ENCODE measurements at regions of chr6 and their contacts with region 1.

Region 1: DNA sequence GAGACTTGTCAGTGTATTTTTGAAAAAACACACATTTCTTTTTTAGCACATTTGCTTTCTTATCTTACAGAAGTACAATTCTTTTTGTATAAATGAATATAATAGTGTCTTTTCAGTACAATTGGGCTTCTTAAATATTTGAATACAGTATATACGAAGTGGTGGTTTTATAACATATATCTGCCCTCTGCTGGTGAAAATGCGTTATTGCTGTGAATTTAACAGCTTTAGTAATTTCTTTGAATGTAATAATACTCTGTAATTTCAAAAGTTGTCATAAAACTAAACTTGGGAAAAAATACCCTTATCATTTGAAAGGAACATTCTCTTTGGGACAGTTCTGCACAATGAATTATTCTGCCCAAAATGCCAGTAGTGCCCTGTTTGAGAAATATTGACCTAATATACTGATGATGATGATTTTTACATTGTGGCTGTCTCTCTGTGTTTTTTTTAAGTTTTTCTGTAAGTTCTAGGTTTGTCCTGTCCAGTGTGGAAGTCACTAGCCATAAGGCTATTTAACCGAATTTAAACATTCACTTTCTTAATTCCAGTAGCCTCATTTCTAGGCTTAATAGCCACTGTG is 19.0 kb downstream of the SMAP1 start:
- DNase-seq: no peak
- H3K4me3 ChIP-seq: no peak overlapping the region
- H3K4me3 Mint-ChIP-seq: no peak overlapping the region
- H3K27ac Mint-ChIP-seq: no peak overlapping the region
- H3K4me1 ChIP-seq: no peaks in the 10 kb centered on the region
- H3K4me1 Mint-ChIP-seq: peaks cover 20% of the 10 kb centered on the region
- H3K27me3 ChIP-seq: no peaks in the 10 kb centered on the region
- H3K27me3 Mint-ChIP-seq: no peaks in the 10 kb centered on the region
- CTCF ChIP-seq: peak; percentile 49

Region 2: GRCh38 chr6:70310063-70310694 is 376.5 kb before region 1 on chr6:
- CTCF ChIA-PET with region 1: interaction called, 3 read pairs
- POLR2A ChIA-PET with region 1: no interaction called
- intact Hi-C with region 1: loop called (anchors 5 kb)
- DNase-seq: peak in 1 of 2 experiments; percentile 39
- H3K4me3 ChIP-seq: no peak overlapping the region
- H3K4me3 Mint-ChIP-seq: no peak overlapping the region
- H3K27ac Mint-ChIP-seq: no peak overlapping the region
- H3K4me1 ChIP-seq: no peaks in the 10 kb centered on the region
- H3K4me1 Mint-ChIP-seq: peaks cover 6% of the 10 kb centered on the region
- H3K27me3 ChIP-seq: no peaks in the 10 kb centered on the region
- H3K27me3 Mint-ChIP-seq: peaks cover 13% of the 10 kb centered on the region
- CTCF ChIP-seq: peak; percentile 19 to 52

Region 3: GRCh38 chr6:70547313-70547712 is 139.3 kb before region 1 on chr6:
- CTCF ChIA-PET with region 1: interaction called, 3 read pairs
- POLR2A ChIA-PET with region 1: no interaction called
- intact Hi-C with region 1: loop called (anchors 1 kb)
- DNase-seq: no peak
- H3K4me3 ChIP-seq: no peak overlapping the region
- H3K4me3 Mint-ChIP-seq: no peak overlapping the region
- H3K27ac Mint-ChIP-seq: no peak overlapping the region
- H3K4me1 ChIP-seq: no peaks in the 10 kb centered on the region
- H3K4me1 Mint-ChIP-seq: no peaks in the 10 kb centered on the region
- H3K27me3 ChIP-seq: no peaks in the 10 kb centered on the region
- H3K27me3 Mint-ChIP-seq: no peaks in the 10 kb centered on the region
- CTCF ChIP-seq: peak; percentile 25 to 67

Region 4: GRCh38 chr6:70622461-70622860 is 64.2 kb before region 1 on chr6:
- CTCF ChIA-PET with region 1: no interaction called
- POLR2A ChIA-PET with region 1: no interaction called
- intact Hi-C with region 1: loop called (anchors 5 kb)
- DNase-seq: no peak
- H3K4me3 ChIP-seq: no peak overlapping the region
- H3K4me3 Mint-ChIP-seq: peak overlapping the region; percentile 18
- H3K27ac Mint-ChIP-seq: no peak overlapping the region
- H3K4me1 ChIP-seq: peaks cover 12% of the 10 kb centered on the region
- H3K4me1 Mint-ChIP-seq: peaks cover 6% of the 10 kb centered on the region
- H3K27me3 ChIP-seq: no peaks in the 10 kb centered on the region
- H3K27me3 Mint-ChIP-seq: no peaks in the 10 kb centered on the region
- CTCF ChIP-seq: no peak